AG04449 (cell line): ENCODE measurements at regions of chr1 and their contacts with region 1.

Region 1: GRCh38 chr1:31715087-31715872 is 11.5 kb upstream of the COL16A1 start:
- DNase-seq: no peak
- H3K4me3 ChIP-seq: peak overlapping the region; percentile 45
- CTCF ChIP-seq: peak; percentile 92

Region 2: DNA sequence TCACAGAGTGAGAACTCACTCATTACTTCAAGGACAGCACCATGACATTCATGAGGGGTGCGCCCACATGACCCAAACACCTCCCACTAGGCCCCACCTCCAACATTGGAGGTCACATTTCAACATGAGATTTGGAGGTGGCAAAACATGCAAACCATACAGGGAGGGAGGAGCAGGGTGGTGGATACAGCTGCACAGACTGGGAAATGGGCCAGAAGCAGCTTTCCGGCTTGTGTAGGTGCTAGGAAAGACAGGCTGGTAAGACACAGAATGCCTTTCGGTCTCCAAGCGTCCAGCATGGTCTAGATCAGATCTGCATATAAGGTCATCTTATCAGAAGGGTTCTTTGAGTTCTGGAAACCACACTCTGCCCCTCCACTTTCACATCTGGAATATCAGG is 174.1 kb before region 1 on chr1:
- CTCF ChIA-PET with region 1: no interaction called
- POLR2A ChIA-PET with region 1: no interaction called
- DNase-seq: no peak
- H3K4me3 ChIP-seq: no peak overlapping the region
- CTCF ChIP-seq: no peak

Region 3: GRCh38 chr1:31564134-31564989 is 150.9 kb before region 1 on chr1:
- CTCF ChIA-PET with region 1: interaction called, 13 read pairs
- POLR2A ChIA-PET with region 1: no interaction called
- DNase-seq: no peak
- H3K4me3 ChIP-seq: no peak overlapping the region
- CTCF ChIP-seq: peak; percentile 80

Region 4: GRCh38 chr1:31669786-31670592 is 45.3 kb before region 1 on chr1:
- CTCF ChIA-PET with region 1: interaction called, 92 read pairs
- POLR2A ChIA-PET with region 1: no interaction called
- DNase-seq: no peak
- H3K4me3 ChIP-seq: no peak overlapping the region
- CTCF ChIP-seq: peak; percentile 7

Region 5: GRCh38 chr1:31705080-31705866 is 10.0 kb before region 1 on chr1:
- CTCF ChIA-PET with region 1: interaction called, 117 read pairs
- POLR2A ChIA-PET with region 1: interaction called, 101 read pairs
- DNase-seq: no peak
- H3K4me3 ChIP-seq: peak overlapping the region; percentile 80
- CTCF ChIP-seq: peak; percentile 61

Region 6: DNA sequence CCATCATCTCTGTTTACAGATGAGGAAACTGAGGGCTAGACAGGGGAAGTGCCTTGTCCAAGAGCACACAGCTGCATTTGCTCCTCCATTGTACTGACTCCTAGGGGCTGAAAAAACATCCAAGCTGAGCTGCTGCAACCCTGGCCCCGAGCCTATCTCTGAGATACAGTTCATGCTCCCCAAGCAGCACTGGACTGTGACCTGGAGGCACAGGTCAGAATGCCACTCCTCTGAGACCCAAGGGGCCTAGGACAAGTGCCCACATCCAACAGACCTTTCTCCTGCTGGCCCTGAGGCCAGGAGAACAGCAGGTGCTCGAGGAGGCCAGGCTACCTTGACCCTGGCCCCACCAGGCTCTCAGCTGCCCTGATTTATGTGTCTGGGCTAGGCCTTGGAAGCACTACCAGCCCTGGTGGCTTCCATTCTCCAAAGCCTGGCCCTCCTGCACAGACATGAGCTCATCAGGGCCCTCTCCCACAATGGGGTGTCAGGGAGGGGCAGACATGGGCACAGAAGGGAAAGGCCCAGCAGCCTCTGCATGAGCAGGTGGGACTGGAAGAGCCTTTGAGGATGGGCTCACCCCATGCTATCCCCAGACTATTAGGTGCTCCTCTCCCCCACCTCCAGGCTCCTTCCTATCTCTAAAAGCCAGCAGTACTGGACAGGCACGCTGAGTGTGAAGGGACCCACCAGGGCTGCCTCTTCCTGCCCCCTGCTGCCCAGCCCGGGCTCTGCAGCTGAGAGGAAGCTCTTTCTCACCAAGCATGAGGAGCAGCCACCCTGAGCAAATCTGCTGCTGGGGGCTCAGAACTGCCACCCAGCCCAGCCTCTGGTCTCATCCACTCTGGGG is 30.0 kb after region 1 on chr1:
- CTCF ChIA-PET with region 1: interaction called, 87 read pairs
- POLR2A ChIA-PET with region 1: no interaction called
- DNase-seq: no peak
- H3K4me3 ChIP-seq: no peak overlapping the region
- CTCF ChIP-seq: peak; percentile 92

Region 7: GRCh38 chr1:31789259-31790065 is 74.2 kb after region 1 on chr1:
- CTCF ChIA-PET with region 1: interaction called, 36 read pairs
- POLR2A ChIA-PET with region 1: no interaction called
- DNase-seq: peak; percentile 49
- H3K4me3 ChIP-seq: peak overlapping the region; percentile 76
- CTCF ChIP-seq: peak; percentile 99

Region 8: DNA sequence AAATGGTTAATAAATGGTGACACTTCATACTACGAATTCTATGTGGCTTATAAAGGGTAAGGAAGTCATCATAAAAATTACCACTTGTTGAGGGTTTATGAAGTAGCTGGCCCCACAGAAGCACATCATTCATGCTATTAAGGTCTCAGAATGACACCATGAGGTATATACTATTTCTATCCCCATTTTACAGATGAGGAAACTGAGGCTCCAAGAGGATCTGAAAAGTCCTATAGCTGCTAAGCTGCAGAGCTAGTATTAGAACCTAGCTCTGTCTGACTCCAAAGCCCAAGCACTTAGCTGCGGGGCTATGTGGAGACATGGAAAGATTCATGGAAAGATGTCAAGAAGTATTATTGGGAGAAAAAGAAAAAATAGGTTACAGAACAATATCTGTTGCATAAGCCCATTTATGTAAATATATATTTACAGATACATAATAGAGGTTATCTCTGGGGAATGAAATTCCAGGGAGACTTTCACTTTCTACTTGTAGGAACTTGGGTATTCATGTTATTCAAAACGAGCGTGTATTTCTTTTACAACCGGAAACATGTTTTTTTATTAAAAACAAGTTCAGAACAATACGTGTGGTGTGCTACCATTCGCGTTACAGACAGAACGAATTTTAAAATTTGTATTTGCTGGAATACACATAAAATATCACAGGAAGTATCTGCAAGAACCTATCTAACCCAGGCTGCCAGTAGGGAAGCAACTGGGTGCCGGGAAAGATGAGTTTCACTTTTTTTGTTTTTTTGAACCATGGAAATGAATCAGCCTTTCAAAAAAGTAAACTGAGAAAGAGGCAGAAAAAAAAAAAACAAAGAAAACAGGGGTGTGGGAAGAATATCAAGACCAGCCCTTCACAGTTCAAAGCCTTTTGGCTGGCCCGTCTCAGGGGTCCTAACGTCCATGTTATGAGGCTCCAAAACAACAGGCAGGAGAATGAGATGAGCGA is 87.2 kb after region 1 on chr1:
- CTCF ChIA-PET with region 1: no interaction called
- POLR2A ChIA-PET with region 1: no interaction called
- DNase-seq: no peak
- H3K4me3 ChIP-seq: no peak overlapping the region
- CTCF ChIP-seq: no peak